Heart left ventricle (tissue), 16 donors: ENCODE measurements at regions of chr2 and their contacts with region 1.

Region 1: GRCh38 chr2:207166039-207166348 is 246 bp upstream of the KLF7 start:
- DNase-seq: peak; percentile 99 to 100 (median 99)
- ATAC-seq: peak; percentile 93 to 95 (median 94)
- H3K4me3 ChIP-seq: peak overlapping the region; percentile 62 to 96 (median 80)
- H3K27ac ChIP-seq: peak overlapping the region; percentile 94 to 100 (median 100)
- H3K4me1 ChIP-seq: peaks cover 11 to 49% (median 31%) of the 10 kb centered on the region in 12 donors
- H3K27me3 ChIP-seq: no peaks in the 10 kb centered on the region
- CTCF ChIP-seq: no peak
- POLR2A ChIP-seq: no peak

Region 2: GRCh38 chr2:206800506-206801417 is 365.2 kb before region 1 on chr2:
- intact Hi-C with region 1: loop called in 3 of 10 experiments (anchors 5 to 10 kb)
- DNase-seq: peak in 4 of 5 donors; percentile 58 to 72 (median 64)
- ATAC-seq: peak; percentile 67 to 81 (median 73)
- H3K4me3 ChIP-seq: peak overlapping the region in 4 of 12 donors; percentile 20 to 36 (median 26)
- H3K27ac ChIP-seq: no peak overlapping the region
- H3K4me1 ChIP-seq: peaks cover 0 to 28% (median 9%) of the 10 kb centered on the region in 12 donors
- H3K27me3 ChIP-seq: no peaks in the 10 kb centered on the region
- CTCF ChIP-seq: peak; percentile 56 to 82 (median 74)
- POLR2A ChIP-seq: no peak

Region 3: DNA sequence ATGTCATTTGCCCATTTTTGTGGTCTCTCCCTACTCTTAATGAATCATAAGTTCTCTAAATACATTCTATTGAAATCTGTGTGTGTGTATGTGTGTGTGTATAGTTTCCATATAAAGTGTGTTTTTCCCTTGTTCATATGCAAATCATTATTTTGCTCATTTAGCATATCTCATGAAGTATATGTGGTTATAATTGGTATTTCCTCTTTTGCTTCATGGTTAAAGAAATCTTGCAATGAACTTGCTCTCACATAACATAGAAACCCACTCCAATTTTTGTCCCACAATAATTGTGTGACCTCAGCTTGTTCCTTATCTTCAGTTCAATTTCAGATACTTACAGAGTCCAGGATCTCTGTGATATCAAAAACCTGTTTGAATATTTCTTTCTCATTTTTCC is 225.4 kb before region 1 on chr2:
- intact Hi-C with region 1: no loop called
- DNase-seq: no peak
- ATAC-seq: no peak
- H3K4me3 ChIP-seq: no peak overlapping the region
- H3K27ac ChIP-seq: no peak overlapping the region
- H3K4me1 ChIP-seq: peaks cover 0 to 13% (median 0%) of the 10 kb centered on the region in 12 donors
- H3K27me3 ChIP-seq: no peaks in the 10 kb centered on the region
- CTCF ChIP-seq: no peak
- POLR2A ChIP-seq: no peak

Region 4: GRCh38 chr2:207073801-207074678 is 92.0 kb before region 1 on chr2:
- intact Hi-C with region 1: loop called in 2 of 10 experiments (anchors 5 kb)
- DNase-seq: peak in 1 of 5 donors; percentile 29
- ATAC-seq: peak in 3 of 4 donors; percentile 61 to 79 (median 72)
- H3K4me3 ChIP-seq: peak overlapping the region in 5 of 12 donors; percentile 3 to 22 (median 4)
- H3K27ac ChIP-seq: peak overlapping the region in 11 of 12 donors; percentile 4 to 61 (median 44)
- H3K4me1 ChIP-seq: peaks cover 0 to 41% (median 23%) of the 10 kb centered on the region in 12 donors
- H3K27me3 ChIP-seq: no peaks in the 10 kb centered on the region
- CTCF ChIP-seq: peak in 3 of 12 donors; percentile 6 to 26 (median 23)
- POLR2A ChIP-seq: no peak

Region 5: DNA sequence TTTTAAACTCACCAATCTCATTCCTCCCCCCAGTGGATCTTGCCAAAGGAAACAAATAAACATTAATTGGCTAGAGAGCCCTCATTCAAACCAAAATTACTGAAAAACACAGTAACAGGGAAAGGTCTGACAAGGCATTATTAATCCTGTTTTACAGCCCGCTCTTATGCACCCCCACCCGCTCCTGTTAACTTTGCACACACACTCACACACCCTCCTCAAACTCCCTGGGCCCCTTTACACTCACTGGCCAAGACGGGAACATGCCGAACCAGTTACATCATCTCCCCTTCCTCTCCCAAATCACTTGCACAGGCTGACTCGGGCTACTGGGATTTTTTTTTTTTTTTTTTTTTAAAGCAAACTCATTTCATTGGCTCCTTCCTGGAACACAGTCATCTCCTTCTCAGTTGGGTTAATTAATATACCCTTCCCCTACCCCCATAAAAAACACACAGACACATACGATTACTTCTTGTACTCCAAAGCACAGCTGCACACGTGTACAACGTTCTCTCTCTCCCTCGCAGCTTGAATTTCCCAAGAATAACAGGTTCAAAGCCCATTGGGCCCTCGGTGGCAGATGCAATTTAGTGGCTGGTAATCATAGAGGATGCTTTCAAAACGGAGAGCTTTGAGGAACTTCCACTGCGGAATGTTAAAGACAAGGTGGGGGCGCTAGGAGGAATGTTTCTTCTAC is 32.0 kb before region 1 on chr2:
- intact Hi-C with region 1: loop called in 5 of 10 experiments (anchors 2 to 5 kb)
- DNase-seq: peak; percentile 64 to 91 (median 85)
- ATAC-seq: peak; percentile 96 to 97 (median 96)
- H3K4me3 ChIP-seq: peak overlapping the region in 7 of 12 donors; percentile 5 to 27 (median 18)
- H3K27ac ChIP-seq: peak overlapping the region; percentile 70 to 92 (median 84)
- H3K4me1 ChIP-seq: peaks cover 35 to 99% (median 88%) of the 10 kb centered on the region in 12 donors
- H3K27me3 ChIP-seq: no peaks in the 10 kb centered on the region
- CTCF ChIP-seq: no peak
- POLR2A ChIP-seq: peak in 1 of 2 donors; percentile 13

Region 6: GRCh38 chr2:207206011-207206410 is 40.0 kb after region 1 on chr2:
- intact Hi-C with region 1: no loop called
- DNase-seq: no peak
- ATAC-seq: no peak
- H3K4me3 ChIP-seq: no peak overlapping the region
- H3K27ac ChIP-seq: no peak overlapping the region
- H3K4me1 ChIP-seq: no peaks in the 10 kb centered on the region
- H3K27me3 ChIP-seq: no peaks in the 10 kb centered on the region
- CTCF ChIP-seq: no peak
- POLR2A ChIP-seq: no peak

Region 7: DNA sequence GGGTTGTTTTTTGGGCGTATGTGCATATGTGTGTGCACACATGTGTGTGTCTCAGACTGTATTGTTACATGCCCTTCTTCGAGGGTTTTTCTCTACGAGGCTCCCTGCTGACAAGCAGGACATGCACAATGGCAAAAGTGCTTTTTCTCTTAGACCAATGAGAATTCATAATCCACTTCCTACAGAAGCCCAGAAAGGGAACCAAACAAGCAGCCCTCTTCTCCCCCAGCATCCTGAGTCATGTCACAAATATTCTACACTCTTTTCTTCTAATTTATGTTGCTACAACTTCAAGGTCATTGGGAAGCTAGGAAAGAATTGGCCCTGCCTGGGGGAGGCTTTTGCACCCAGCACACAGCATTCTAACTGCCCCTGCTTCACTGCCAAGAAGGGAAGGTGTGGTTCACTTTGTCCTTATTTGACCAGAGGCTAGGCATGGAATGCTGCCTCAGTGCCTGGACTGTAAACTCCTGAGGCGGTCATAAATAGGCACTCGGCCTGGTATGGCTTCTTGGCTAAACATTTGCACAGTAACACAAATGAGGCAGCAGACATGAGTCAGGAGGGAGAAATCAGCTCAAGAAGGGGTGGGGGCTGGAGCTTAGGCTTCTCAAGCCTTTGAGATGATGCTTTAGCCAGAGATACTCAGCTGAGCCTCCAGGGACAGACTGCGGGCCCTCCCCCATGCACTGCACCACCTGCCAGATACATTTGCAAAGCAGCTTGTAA is 92.4 kb after region 1 on chr2:
- intact Hi-C with region 1: loop called in 4 of 10 experiments (anchors 1 to 5 kb)
- DNase-seq: peak in 4 of 5 donors; percentile 51 to 84 (median 62)
- ATAC-seq: peak; percentile 74 to 90 (median 89)
- H3K4me3 ChIP-seq: no peak overlapping the region
- H3K27ac ChIP-seq: peak overlapping the region; percentile 30 to 77 (median 56)
- H3K4me1 ChIP-seq: peaks cover 15 to 65% (median 42%) of the 10 kb centered on the region in 12 donors
- H3K27me3 ChIP-seq: no peaks in the 10 kb centered on the region
- CTCF ChIP-seq: no peak
- POLR2A ChIP-seq: no peak

Region 8: GRCh38 chr2:207311316-207312005 is 145.5 kb after region 1 on chr2:
- intact Hi-C with region 1: no loop called
- DNase-seq: peak in 3 of 5 donors; percentile 36 to 78 (median 42)
- ATAC-seq: peak; percentile 69 to 97 (median 94)
- H3K4me3 ChIP-seq: no peak overlapping the region
- H3K27ac ChIP-seq: peak overlapping the region in 7 of 12 donors; percentile 1 to 80 (median 59)
- H3K4me1 ChIP-seq: peaks cover 0 to 20% (median 11%) of the 10 kb centered on the region in 12 donors
- H3K27me3 ChIP-seq: no peaks in the 10 kb centered on the region
- CTCF ChIP-seq: peak in 6 of 12 donors; percentile 8 to 31 (median 20)
- POLR2A ChIP-seq: no peak

Region 9: GRCh38 chr2:207625018-207625907 is 459.3 kb after region 1 on chr2 and contains the start of gene METTL21A:
- intact Hi-C with region 1: loop called in 1 of 10 experiments (anchors 10 kb)
- DNase-seq: peak; percentile 89 to 95 (median 92)
- ATAC-seq: peak; percentile 82 to 96 (median 90)
- H3K4me3 ChIP-seq: peak within 1 kb of the TSS; percentile 60 to 98 (median 92)
- H3K27ac ChIP-seq: peak within 1 kb of the TSS; percentile 87 to 99 (median 94)
- H3K4me1 ChIP-seq: peaks cover 0 to 41% (median 15%) of the 10 kb centered on the region in 12 donors
- H3K27me3 ChIP-seq: no peaks in the 10 kb centered on the region
- CTCF ChIP-seq: peak in 11 of 12 donors; percentile 6 to 61 (median 36)
- POLR2A ChIP-seq: peak; percentile 25 to 86
- total RNA-seq, gene METTL21A: 10.2 to 27.6 (median 14.6) TPM